ENCODE measurements at regions of chr20 and their contacts with region 1.

Region 1: GRCh38 chr20:62907384-62908317 is 18.7 kb downstream of the DIDO1 start:
- DNase-seq: peak in 1 of 2 experiments; percentile 68
- H3K4me3 ChIP-seq: no peak overlapping the region
- H3K4me3 Mint-ChIP-seq: no peak overlapping the region
- H3K27ac Mint-ChIP-seq: peak overlapping the region; percentile 65
- H3K4me1 ChIP-seq: no peaks in the 10 kb centered on the region
- H3K4me1 Mint-ChIP-seq: peaks cover 1% of the 10 kb centered on the region
- H3K27me3 ChIP-seq: no peaks in the 10 kb centered on the region
- H3K27me3 Mint-ChIP-seq: no peaks in the 10 kb centered on the region
- CTCF ChIP-seq: peak; percentile 85 to 98

Region 2: DNA sequence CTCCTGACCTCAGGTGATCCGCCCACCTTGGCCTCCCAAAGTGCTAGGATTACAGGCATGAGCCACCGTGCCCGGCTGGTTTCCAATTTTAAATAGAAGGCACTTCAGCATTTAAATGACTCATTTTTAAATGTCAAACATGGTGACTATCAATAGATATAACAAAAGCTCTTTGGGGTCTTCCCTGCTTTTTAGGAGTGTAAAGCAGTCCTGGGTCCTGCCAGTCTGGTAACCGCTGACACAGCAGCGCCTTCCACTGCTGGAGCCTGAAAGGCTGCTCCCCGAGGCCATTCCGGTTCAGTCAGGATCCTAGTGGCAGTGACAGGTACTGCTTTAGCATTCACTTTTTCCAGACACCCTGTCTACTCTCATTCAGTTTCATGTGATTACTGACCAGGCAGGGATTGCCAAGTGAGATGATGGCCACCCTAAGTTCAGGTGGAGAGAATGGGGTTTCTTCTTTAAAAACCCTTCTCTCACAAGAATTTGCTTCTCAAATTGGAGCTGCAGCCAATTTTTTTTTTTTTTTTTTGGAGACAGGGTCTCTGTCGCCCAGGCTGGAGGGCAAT is 13.6 kb after region 1 on chr20:
- CTCF ChIA-PET with region 1: interaction called, 10 read pairs
- POLR2A ChIA-PET with region 1: no interaction called
- intact Hi-C with region 1: no loop called
- DNase-seq: peak; percentile 83 to 84
- H3K4me3 ChIP-seq: no peak overlapping the region
- H3K4me3 Mint-ChIP-seq: no peak overlapping the region
- H3K27ac Mint-ChIP-seq: peak overlapping the region; percentile 49
- H3K4me1 ChIP-seq: peaks cover 57% of the 10 kb centered on the region
- H3K4me1 Mint-ChIP-seq: peaks cover 69% of the 10 kb centered on the region
- H3K27me3 ChIP-seq: no peaks in the 10 kb centered on the region
- H3K27me3 Mint-ChIP-seq: no peaks in the 10 kb centered on the region
- CTCF ChIP-seq: peak; percentile 69 to 82

Measured in Caco-2 (cell line).